ENCODE measurements at regions of chr9 and their contacts with region 1.

Region 1: DNA sequence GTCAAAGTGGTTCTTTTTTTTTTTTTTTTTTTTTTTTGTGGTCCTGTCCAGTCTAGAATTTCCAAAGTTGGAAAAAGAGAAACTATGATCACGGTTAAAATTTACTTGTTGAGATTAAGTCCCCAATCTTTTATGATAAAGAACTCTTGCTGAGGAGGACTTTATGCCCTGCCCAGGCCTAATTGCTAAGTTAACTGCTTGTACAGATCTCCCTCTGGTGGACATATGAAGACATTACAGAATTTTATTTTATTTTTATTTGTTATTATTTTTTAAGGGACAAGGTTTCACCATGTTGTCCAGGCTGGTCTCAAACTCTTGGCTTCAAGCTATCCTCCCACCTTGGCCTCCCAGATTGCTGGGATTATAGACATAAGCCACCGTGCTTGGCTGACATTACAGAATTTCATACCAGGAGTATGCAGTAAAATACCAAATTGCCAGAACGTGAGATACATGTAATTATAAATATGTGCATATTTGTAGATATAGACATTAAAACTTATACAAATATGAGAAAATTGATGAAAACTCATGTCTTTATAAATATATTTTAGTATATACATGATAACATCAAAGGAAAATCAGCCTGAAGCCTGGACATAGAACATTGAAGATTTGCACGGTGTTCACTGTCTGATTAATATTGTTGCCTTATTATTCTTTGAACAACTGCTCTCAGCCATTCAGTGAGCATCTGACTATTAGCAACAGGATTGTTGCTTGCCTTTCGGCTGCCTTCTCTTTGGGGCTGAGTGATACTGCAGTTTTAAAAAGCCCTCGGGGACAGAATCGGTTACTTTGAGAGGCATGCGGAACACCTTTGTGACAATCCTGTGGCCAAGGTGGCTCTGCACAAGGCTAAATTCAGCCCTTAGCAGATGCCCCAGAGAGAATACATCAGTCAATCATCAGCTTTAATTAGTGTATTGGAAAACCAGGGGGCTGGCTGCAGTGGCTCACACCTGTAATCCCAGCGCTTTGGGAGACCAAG is 91.0 kb downstream of the RFK start:
- DNase-seq: no peak
- ATAC-seq: no peak

Region 2: DNA sequence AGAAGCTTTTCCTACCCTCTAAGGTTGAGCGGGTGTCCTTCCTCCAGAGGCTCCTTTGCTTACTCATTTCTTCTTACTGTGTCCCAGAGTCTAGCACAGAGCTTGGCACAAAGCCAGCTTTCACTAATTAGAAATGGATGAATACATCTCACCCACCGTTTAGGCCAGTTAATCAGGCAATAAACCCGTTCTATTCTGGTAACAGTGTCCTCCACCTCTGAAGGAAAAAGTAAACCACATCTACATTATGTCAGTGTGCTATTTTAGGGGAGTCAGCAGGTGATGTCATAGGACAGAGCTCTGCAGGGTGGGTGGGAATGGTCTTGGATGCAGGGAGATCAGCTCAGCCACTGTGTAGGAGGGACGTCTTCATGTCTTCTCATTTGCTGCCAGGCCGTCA is 1105.7 kb before region 1 on chr9:
- intact Hi-C with region 1: loop called (anchors 5 kb)
- DNase-seq: no peak
- ATAC-seq: peak; percentile 38

Region 3: GRCh38 chr9:75265525-75265972 is 1037.7 kb before region 1 on chr9:
- intact Hi-C with region 1: loop called (anchors 5 kb)
- DNase-seq: no peak
- ATAC-seq: peak; percentile 72

Region 4: GRCh38 chr9:76379512-76379911 is 76.3 kb after region 1 on chr9:
- intact Hi-C with region 1: no loop called
- DNase-seq: no peak
- ATAC-seq: no peak

Region 5: GRCh38 chr9:76393963-76394679 is 90.9 kb after region 1 on chr9 and contains the start of gene RFK:
- intact Hi-C with region 1: no loop called
- DNase-seq: peak; percentile 90
- ATAC-seq: peak; percentile 98
- total RNA-seq, gene RFK: 28.3 TPM

Measured in left ventricle myocardium superior (tissue), 1 donor.